GM12878 (cell line): ENCODE measurements at regions of chr12 and their contacts with region 1.

Region 1: GRCh38 chr12:43988838-43989560 is 153.1 kb downstream of the TMEM117 start:
- DNase-seq: peak; percentile 17
- ATAC-seq: peak; percentile 92
- H3K4me3 ChIP-seq: no peak overlapping the region
- H3K27ac ChIP-seq: no peak overlapping the region
- H3K4me1 ChIP-seq: peaks cover 8% of the 10 kb centered on the region; the same call in 1 of the 2 replicates
- H3K27me3 ChIP-seq: no peaks in the 10 kb centered on the region
- CTCF ChIP-seq: no peak
- EP300 ChIP-seq: 0 out of 4 replicates have a peak, but pooled peaks of 1 of the 2 experiments have one; percentile 24
- POLR2A ChIP-seq: no peak
- RAD21 ChIP-seq: no peak

Region 2: GRCh38 chr12:43758728-43759563 is 230.1 kb before region 1 on chr12 and contains the starts of genes IRAK4 and PUS7L:
- CTCF ChIA-PET with region 1: no interaction called
- POLR2A ChIA-PET with region 1: no interaction called
- RAD21 ChIA-PET with region 1: no interaction called
- SMC1A ChIA-PET with region 1: no interaction called
- in situ Hi-C with region 1: no loop called
- intact Hi-C with region 1: no loop called
- DNase-seq: peak; percentile 87
- ATAC-seq: peak; percentile 92
- H3K4me3 ChIP-seq: peak within 1 kb of the TSS; percentile 84
- H3K27ac ChIP-seq: peak within 1 kb of the TSS; percentile 96
- H3K4me1 ChIP-seq: 0 out of 2 replicates have a peak, but pooled peaks cover 4% of the 10 kb centered on the region
- H3K27me3 ChIP-seq: no peaks in the 10 kb centered on the region
- CTCF ChIP-seq: peak; percentile 39 to 77 (median 56); a peak in 5 of 6 replicates
- EP300 ChIP-seq: no peak
- POLR2A ChIP-seq: peak; percentile 93
- RAD21 ChIP-seq: peak; percentile 43; the same call in 1 of the 2 replicates
- polyA plus RNA-seq, gene IRAK4: 7.9 to 13.8 TPM
- polyA plus RNA-seq, gene PUS7L: 9.2 to 42.1 TPM

Region 3: DNA sequence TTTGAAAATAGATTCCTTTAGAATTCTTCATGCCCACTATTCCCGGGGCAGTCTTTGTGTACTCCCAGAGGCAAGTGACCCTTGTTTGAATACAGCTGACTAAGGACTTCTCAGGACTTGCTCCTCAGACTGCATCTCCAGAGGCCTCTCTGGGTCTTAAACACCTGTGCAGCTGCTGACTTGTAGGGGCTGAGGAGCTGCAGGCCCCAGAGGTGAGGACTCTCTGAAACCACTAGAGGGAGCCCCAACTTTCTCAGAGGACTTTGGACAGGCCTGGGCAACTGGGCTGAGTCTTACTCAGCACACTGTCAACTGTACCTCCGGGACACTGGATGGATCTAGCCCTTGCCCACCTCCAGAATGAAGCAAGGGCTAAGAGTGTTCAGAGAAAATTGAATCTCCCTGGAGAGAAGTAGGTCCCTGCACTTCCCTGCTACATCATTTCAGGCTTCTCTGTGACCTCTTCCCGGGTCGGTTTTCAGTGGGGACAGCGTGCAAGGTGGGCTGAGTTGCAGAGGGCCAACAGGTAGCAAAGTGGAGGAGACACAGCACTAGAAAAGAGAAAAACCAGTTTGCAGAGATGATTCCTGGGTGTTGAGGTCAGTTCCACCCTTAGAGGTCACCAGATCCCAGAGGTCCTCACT is 11.4 kb after region 1 on chr12:
- CTCF ChIA-PET with region 1: interaction called, 24 read pairs
- POLR2A ChIA-PET with region 1: no interaction called
- RAD21 ChIA-PET with region 1: no interaction called
- SMC1A ChIA-PET with region 1: interaction called, 5 read pairs
- in situ Hi-C with region 1: no loop called
- intact Hi-C with region 1: no loop called
- DNase-seq: no peak
- ATAC-seq: peak; percentile 99
- H3K4me3 ChIP-seq: no peak overlapping the region
- H3K27ac ChIP-seq: no peak overlapping the region
- H3K4me1 ChIP-seq: no peaks in the 10 kb centered on the region
- H3K27me3 ChIP-seq: no peaks in the 10 kb centered on the region
- CTCF ChIP-seq: peak; percentile 53 to 72 (median 65)
- EP300 ChIP-seq: no peak
- POLR2A ChIP-seq: no peak
- RAD21 ChIP-seq: peak; percentile 50; the same call in 1 of the 2 replicates

Region 4: DNA sequence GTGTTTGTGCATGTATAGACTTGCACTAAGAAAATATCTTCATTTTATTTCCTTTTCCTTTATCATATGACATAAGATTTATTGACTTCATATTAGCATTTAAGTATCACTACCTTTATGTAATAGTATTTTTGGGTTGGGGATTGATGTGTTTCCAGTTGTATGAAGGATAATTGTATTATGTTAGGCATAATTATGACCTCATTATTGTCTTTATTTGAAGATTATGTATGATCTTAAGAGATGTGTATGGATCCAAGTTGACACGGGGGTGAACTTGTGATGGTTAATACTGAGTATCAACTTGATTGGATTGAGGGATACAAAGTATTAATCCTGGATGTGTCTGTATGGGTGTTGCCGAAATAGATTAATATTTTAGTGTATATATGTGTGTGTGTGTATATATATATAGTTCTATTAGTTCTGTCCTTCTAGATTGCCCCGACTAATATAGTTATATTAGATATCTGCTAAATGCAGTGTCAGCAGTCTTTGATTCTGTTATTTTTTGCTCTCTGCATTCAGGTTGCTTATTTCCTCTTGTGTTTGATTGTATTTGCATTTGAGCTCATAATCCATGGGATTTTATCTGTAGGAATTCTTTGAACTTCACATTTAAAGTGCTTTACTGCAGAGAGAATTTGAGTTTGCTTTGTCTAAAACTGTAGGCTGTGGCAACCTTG is 57.9 kb after region 1 on chr12:
- CTCF ChIA-PET with region 1: no interaction called
- POLR2A ChIA-PET with region 1: no interaction called
- RAD21 ChIA-PET with region 1: no interaction called
- SMC1A ChIA-PET with region 1: no interaction called
- in situ Hi-C with region 1: no loop called
- intact Hi-C with region 1: no loop called
- DNase-seq: no peak
- ATAC-seq: no peak
- H3K4me3 ChIP-seq: no peak overlapping the region
- H3K27ac ChIP-seq: no peak overlapping the region
- H3K4me1 ChIP-seq: no peaks in the 10 kb centered on the region
- H3K27me3 ChIP-seq: no peaks in the 10 kb centered on the region
- CTCF ChIP-seq: no peak
- EP300 ChIP-seq: no peak
- POLR2A ChIP-seq: no peak
- RAD21 ChIP-seq: no peak